Mucosa of descending colon (tissue), 3 donors: ENCODE measurements at regions of chr19 and their contacts with region 1.

Region 1: DNA sequence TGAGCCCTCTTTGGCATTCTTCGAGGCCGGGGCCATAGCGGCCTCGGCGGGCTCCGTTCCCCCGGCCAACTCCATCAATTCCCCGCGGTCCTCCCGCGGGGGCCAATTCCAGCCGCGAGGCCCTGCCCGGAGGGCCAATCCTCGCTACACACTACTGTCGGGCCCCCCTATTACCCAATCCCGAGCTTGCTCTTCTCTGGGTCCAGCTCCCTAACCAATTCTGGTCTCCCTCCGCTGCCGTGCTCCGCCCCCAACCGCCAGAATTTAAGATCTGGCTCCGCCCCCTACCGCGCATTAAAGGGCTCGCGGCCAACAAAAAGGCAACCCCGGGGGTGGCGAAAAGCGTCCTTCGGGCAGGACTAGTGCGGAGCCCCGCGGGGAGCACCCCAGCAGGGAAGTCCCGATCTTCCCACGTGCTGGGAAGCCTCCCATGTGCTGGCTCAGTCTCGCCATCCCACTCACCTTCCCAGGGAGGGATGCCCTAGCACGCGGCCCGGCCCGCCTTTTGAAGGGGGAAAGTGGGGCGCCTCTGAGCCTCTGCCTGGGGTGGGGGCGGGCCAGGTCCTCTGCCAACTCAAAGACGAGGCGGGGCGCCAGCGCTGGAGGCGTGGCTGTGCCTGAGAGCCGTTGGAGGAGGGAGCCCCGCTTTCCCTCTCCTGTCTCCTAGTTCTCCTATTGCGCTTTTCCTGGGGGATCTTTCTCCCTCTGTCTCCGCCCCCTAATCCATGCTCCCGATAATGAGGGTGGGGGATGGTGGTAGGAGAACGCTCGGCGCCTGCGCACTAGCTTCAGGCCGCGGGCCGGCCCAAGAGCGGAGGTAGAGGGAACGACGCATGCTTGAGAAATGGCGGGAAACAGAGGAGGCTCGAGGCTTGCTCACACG is 3.5 kb downstream of the LIPE start:
- DNase-seq: peak; percentile 92 to 93 (median 93)
- ATAC-seq: peak; percentile 94
- H3K4me3 ChIP-seq: peak overlapping the region; percentile 35
- H3K4me1 ChIP-seq: peaks cover 8% of the 10 kb centered on the region
- CTCF ChIP-seq: no peak

Region 2: GRCh38 chr19:42360787-42361544 is 62.7 kb before region 1 on chr19:
- intact Hi-C with region 1: loop called in 1 of 2 experiments (anchors 2 kb)
- DNase-seq: no peak
- ATAC-seq: no peak
- H3K4me3 ChIP-seq: no peak overlapping the region
- H3K4me1 ChIP-seq: no peaks in the 10 kb centered on the region
- CTCF ChIP-seq: no peak

Region 3: DNA sequence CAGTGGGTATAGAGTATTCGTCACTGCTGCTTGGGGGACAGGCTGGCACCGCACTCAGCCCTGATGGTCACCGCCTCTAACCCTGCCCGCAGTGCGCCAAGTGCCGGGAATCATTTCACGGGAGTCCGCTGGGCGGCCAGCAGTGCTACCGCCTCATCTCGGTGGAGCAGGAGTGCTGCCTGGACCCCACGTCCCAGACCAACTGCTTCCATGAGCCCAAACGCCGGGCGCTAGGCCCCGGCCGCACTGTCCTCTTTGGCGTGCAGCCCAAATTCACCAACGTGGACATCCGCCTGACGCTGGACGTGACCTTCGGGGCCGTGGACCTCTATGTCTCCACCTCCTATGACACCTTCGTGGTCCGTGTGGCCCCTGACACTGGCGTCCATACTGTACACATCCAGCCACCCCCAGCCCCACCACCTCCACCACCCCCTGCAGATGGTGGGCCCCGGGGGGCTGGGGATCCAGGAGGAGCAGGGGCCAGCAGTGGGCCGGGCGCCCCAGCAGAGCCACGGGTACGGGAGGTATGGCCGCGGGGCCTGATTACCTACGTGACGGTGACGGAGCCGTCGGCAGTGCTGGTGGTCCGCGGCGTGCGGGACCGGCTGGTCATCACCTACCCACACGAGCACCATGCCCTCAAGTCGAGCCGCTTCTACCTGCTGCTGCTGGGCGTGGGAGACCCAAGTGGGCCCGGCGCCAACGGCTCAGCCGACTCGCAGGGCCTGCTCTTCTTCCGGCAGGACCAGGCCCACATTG is 48.1 kb before region 1 on chr19:
- intact Hi-C with region 1: no loop called
- DNase-seq: no peak
- ATAC-seq: no peak
- H3K4me3 ChIP-seq: no peak overlapping the region
- H3K4me1 ChIP-seq: no peaks in the 10 kb centered on the region
- CTCF ChIP-seq: no peak

Region 4: DNA sequence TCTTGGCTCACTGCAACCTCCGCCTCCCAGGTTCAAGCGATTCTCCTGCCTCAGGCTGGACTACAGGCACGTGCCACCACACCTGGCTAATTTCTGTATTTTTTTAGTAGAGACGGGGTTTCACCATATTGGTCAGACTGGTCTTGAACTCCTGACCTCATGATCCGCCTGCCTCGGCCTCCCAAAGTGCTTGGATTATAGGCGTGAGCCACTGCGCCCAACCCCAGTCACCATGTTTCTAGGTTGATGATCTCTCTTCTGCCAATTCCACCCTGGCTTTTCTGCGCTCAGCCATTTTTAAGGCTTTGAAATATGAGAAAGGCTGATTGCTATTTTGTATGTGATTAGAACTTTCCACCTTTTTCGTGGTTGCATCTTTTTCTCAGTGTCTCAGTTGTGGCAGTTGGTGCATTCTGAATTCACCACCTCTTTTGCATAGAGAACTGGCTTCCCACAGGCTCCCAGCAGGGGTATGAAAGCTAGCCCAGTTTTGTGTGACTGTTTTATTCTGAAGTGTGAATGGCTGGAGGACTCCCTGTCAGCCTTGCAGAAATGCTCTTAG is 89.1 kb after region 1 on chr19:
- intact Hi-C with region 1: no loop called
- DNase-seq: no peak
- ATAC-seq: peak; percentile 17
- H3K4me3 ChIP-seq: no peak overlapping the region
- H3K4me1 ChIP-seq: peaks cover 2% of the 10 kb centered on the region
- CTCF ChIP-seq: no peak